Aorta (tissue), 5 donors: ENCODE measurements at regions of chr5 and their contacts with region 1.

Region 1: DNA sequence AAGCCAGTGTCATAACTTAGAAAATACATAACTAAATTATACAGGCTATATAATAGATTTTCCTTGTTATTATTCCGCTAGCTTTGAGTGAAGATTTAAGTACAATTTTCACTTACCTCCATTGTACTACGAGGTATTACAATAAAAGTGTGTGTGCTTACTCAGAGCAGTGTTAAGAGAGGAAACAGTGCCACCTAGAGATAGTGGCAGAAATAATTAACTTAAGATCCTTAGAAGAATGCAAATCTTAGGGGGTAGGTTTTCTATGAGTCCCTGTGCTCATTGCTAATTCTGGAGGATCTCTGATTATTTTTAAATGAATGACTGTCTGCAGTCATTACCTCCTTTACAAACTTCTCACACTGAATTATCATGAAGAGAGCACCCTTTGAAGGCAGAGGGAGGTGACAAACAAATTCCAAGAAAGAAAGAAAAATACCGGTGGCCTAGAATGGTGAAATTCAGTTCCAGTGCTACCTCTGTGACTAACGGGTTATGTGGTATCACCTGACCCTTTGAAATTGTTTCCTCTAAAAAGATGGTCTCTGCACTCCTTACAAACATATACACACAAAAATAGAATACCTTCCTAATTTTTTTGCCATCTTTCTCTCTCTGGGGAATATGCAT is 379.8 kb downstream of the TRIM36 start:
- DNase-seq: no peak
- ATAC-seq: no peak
- H3K4me3 ChIP-seq: no peak overlapping the region
- H3K27ac ChIP-seq: no peak overlapping the region
- H3K4me1 ChIP-seq: no peaks in the 10 kb centered on the region
- H3K27me3 ChIP-seq: no peaks in the 10 kb centered on the region

Region 2: DNA sequence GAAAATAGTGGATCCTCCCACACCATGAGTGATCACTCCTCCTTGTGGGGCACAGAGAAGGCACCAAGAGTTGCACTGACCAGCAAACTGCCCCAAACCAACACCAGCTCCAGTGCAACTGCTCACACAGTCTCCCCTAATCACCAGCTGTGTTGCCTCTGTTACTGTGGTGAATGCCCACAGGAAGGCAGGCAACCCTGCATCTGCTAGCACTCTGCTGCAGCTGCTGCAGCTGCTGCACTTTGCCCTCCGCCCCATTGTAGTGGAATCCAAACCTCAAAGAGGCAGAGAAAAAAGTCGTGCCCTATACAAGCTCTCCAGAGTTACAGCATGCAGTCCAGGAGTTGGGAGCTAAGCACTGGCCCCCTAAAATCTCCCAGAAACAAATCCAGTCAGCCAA is 40.2 kb after region 1 on chr5:
- intact Hi-C with region 1: no loop called
- DNase-seq: no peak
- ATAC-seq: no peak
- H3K4me3 ChIP-seq: no peak overlapping the region
- H3K27ac ChIP-seq: no peak overlapping the region
- H3K4me1 ChIP-seq: no peaks in the 10 kb centered on the region
- H3K27me3 ChIP-seq: no peaks in the 10 kb centered on the region

Region 3: DNA sequence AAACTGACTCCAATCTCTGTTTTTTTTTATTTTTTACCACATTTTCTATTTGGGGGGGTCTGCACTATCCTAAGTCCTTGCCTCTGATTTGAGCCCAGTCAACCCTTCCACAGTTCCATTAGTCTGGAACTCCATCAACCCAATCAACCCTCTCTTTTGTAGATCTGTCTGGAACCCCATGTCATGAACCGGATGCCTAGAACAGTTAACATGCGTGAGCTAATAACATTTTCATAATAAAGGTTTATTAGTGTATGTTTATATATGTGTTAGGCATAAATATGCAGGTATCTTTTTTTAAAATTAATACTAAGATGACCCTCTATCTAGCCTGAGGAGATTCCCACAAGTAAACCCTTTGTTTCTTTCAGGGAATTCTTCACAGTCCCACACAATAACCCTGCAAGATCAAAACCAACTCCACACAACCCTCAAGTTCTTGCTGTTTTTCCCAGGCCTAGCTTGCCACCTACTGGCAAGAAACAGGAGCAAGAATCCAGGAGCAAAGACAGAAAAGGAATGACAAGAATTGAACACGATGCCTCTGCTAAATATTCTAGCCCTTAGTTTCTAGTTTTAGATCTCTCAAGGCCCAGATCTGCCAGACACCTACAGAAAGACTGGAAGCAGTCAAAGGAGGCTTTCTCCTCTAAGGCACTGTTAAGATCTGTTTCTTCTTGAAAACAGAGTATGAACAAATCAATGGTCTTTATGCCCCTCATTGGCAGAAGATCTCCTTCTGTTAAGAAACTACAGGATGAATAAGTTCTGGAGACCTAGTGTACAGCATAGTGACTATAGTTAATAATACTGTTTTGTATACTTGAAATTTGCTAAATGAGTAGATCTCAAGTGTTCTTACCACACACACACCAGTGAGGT is 279.4 kb after region 1 on chr5:
- intact Hi-C with region 1: loop called in 1 of 2 experiments (anchors 5 kb)
- DNase-seq: no peak
- ATAC-seq: no peak
- H3K4me3 ChIP-seq: no peak overlapping the region
- H3K27ac ChIP-seq: no peak overlapping the region
- H3K4me1 ChIP-seq: no peaks in the 10 kb centered on the region
- H3K27me3 ChIP-seq: peaks cover 0 to 2% of the 10 kb centered on the region in 2 donors

Region 4: GRCh38 chr5:115084246-115084793 is 294.4 kb after region 1 on chr5:
- intact Hi-C with region 1: no loop called
- DNase-seq: no peak
- ATAC-seq: no peak
- H3K4me3 ChIP-seq: no peak overlapping the region
- H3K27ac ChIP-seq: no peak overlapping the region
- H3K4me1 ChIP-seq: no peaks in the 10 kb centered on the region
- H3K27me3 ChIP-seq: no peaks in the 10 kb centered on the region

Region 5: DNA sequence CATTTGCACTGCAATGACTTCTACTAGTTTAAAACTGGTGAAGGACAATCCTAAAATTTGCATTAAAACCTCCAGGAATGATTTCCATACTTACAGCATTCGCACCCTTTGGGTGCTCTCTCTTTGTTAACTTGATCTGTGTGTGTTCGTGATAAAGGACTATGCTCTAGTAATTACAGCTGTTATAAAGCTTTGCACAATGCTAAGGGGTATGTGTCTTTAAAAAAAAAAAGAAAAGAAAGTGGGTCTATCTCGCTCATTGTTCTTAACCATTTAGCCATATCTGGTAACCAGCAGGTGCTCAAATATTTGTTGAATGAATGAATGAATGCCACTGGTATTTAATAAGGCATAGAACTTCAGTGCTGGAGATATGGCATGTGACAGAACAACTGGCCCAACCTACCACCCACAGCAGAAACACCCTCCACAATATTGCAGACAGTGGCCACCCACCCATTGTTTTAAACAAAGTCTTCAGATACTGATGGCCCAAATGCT is 371.1 kb after region 1 on chr5:
- intact Hi-C with region 1: no loop called
- DNase-seq: peak in 1 of 2 donors; percentile 26
- ATAC-seq: no peak
- H3K4me3 ChIP-seq: no peak overlapping the region
- H3K27ac ChIP-seq: no peak overlapping the region
- H3K4me1 ChIP-seq: no peaks in the 10 kb centered on the region
- H3K27me3 ChIP-seq: no peaks in the 10 kb centered on the region